ENCODE measurements at regions of chr17 and their contacts with region 1.

Region 1: DNA sequence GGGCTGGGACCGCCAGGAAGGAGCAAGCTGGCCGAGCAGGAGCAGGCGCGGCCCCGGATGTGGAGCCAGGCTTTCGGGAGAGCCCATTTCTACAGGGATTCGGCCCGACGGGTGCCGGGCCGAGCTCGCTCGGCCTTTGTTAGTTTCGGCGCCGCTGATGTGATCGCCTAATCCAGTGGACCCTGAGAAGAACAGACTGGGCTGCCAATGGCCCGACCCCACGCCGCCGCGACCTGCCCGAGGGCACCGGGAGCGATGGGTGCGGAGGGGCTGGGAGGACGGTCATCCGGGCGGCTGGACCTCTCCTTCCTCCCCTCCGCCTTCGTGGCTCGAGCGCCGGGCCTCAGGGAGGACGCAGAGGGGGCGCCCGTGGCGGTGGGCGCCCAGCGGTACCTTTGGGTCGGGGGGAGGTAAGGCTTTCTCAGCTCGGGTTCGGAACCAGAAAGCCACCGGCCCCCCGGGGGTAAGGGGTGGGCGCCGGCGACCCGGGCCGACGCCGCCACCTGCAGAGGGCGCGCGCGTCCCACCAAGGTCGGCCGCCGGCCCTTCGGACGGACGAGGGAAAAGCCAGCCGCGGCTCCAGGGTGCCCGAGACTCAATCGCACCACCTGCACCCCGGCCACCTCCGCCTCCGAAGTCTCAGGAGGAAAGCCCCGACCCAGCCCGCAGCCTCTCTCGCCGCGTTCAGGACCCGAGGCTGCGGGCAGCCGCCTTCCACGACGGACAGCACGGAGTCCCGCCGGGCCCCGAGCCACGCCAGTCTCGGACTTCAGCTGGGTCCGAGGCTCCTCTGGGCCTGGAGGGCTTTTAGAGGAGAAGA is 7.1 kb downstream of the CBX8 start:
- DNase-seq: peak in 1 of 4 donors; percentile 91
- ATAC-seq: peak; percentile 81
- H3K4me3 ChIP-seq: no peak overlapping the region
- H3K27ac ChIP-seq: no peak overlapping the region
- H3K4me1 ChIP-seq: peaks cover 11 to 36% of the 10 kb centered on the region in 2 donors
- H3K27me3 ChIP-seq: peaks cover 48 to 94% of the 10 kb centered on the region in 2 donors
- CTCF ChIP-seq: peak; percentile 75 to 79

Region 2: DNA sequence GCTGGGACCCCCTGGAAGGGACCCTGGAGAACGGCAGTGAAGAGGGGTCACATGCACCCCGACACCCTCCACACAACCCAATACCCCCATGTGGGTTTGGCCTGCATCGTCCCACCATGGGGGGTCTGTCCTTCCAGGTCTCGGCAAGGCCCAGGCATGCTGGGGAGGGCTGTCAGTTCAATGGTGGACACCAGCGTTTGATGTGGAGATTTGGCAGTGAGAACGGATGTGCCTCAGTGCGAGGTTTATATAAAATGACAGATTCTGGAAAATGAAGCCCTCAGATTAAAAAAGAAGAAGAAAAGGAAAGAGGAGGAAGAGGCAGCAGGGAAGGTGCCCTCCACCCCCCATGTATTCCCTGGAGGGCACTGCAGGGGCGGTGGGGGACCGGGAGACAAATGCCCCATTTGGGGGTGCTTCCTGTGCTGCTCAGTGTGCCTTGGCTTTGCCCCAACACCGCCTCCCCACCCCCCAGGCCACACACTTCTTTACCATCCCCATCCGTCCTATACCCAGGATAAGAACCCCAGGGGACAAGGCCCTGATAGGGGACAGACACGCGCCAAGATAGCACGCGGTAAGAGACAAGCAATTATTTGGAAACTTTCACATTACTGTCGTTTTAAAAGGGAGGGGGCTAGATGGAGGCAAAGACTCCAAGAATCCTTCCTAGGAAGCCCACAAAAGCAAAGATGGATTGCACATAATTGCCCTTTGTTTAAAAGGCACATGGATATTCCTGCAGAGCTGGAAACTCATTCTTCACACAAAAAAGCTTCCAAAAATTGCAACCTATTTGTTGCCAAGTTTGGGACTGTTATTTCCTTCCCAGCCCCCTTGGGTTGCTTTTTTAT is 199.8 kb before region 1 on chr17:
- intact Hi-C with region 1: no loop called
- DNase-seq: peak in 2 of 4 donors; percentile 11 to 38
- ATAC-seq: no peak
- H3K4me3 ChIP-seq: no peak overlapping the region
- H3K27ac ChIP-seq: no peak overlapping the region
- H3K4me1 ChIP-seq: no peaks in the 10 kb centered on the region
- H3K27me3 ChIP-seq: peaks cover 0 to 51% of the 10 kb centered on the region in 2 donors
- CTCF ChIP-seq: no peak

Region 3: GRCh38 chr17:79600681-79601131 is 189.0 kb before region 1 on chr17:
- intact Hi-C with region 1: no loop called
- DNase-seq: no peak
- ATAC-seq: no peak
- H3K4me3 ChIP-seq: no peak overlapping the region
- H3K27ac ChIP-seq: no peak overlapping the region
- H3K4me1 ChIP-seq: no peaks in the 10 kb centered on the region
- H3K27me3 ChIP-seq: peaks cover 19 to 100% of the 10 kb centered on the region in 2 donors
- CTCF ChIP-seq: no peak

Region 4: GRCh38 chr17:79915850-79916430 is 126.2 kb after region 1 on chr17:
- intact Hi-C with region 1: loop called in 1 of 2 experiments (anchors 10 kb)
- DNase-seq: peak in 3 of 4 donors; percentile 60 to 89 (median 81)
- ATAC-seq: peak; percentile 75
- H3K4me3 ChIP-seq: no peak overlapping the region
- H3K27ac ChIP-seq: no peak overlapping the region
- H3K4me1 ChIP-seq: peaks cover 0 to 12% of the 10 kb centered on the region in 2 donors
- H3K27me3 ChIP-seq: peaks cover 0 to 25% of the 10 kb centered on the region in 2 donors
- CTCF ChIP-seq: peak; percentile 19 to 21

Region 5: GRCh38 chr17:79970576-79971068 is 180.9 kb after region 1 on chr17:
- intact Hi-C with region 1: loop called in 1 of 2 experiments (anchors 10 kb)
- DNase-seq: peak in 2 of 4 donors; percentile 27 to 47
- ATAC-seq: peak; percentile 78
- H3K4me3 ChIP-seq: no peak overlapping the region
- H3K27ac ChIP-seq: no peak overlapping the region
- H3K4me1 ChIP-seq: peaks cover 0 to 3% of the 10 kb centered on the region in 2 donors
- H3K27me3 ChIP-seq: no peaks in the 10 kb centered on the region
- CTCF ChIP-seq: peak; percentile 27 to 33

Region 6: DNA sequence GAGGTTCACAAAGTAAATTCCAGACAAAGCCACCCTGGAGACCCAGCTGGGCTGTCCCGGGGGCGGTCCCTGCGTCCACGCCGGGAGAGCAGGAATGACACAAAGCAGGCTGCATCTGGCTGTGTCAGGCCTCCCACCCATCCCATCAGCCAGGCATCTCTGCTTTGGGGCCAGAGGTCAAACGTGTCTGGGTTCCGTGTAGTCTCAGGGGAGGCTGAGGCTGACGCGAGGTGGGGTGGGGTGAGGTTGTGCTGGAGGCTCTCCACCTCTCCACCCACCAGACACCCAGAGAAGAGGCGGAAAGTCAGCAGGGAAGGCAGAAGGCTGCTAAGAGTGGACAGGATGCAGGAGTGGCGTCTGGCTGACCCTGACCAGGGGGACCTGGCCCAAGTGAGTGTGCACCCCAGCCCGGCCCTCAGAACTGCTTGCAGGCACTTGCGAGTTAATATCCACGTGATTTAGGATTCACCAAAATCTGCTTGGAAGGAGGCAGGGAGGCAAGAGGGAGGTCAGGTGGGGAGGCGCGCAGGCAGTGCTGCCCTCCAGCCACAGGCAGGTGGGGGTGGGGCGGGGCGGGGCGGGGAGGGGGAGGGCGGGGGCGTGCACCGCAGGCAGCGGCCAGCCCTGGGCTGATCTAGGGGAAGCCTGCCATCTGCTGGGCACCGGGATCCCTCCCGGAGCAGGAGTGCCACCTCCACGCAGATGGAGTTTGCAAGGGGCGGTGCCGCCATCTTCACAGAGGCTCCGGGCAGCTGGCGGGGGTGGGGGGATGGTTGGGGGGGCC is 201.6 kb after region 1 on chr17:
- intact Hi-C with region 1: loop called in 1 of 2 experiments (anchors 5 kb)
- DNase-seq: peak in 3 of 4 donors; percentile 88 to 95 (median 89)
- ATAC-seq: peak; percentile 88
- H3K4me3 ChIP-seq: peak overlapping the region; percentile 19 to 42
- H3K27ac ChIP-seq: peak overlapping the region in 1 of 2 donors; percentile 23
- H3K4me1 ChIP-seq: peaks cover 27 to 39% of the 10 kb centered on the region in 2 donors
- H3K27me3 ChIP-seq: peaks cover 0 to 9% of the 10 kb centered on the region in 2 donors
- CTCF ChIP-seq: peak; percentile 29 to 64

Measured in left lung (tissue), 14 donors.